Heart right ventricle (tissue), 16 donors: ENCODE measurements at regions of chr3 and their contacts with region 1.

Region 1: GRCh38 chr3:128170805-128171516 is 17.7 kb downstream of the EEFSEC start:
- DNase-seq: peak; percentile 23 to 70
- ATAC-seq: peak in 7 of 8 donors; percentile 66 to 76 (median 72)
- H3K4me3 ChIP-seq: no peak overlapping the region
- H3K27ac ChIP-seq: no peak overlapping the region
- H3K4me1 ChIP-seq: peaks cover 11 to 80% (median 54%) of the 10 kb centered on the region in 9 donors
- H3K27me3 ChIP-seq: no peaks in the 10 kb centered on the region
- CTCF ChIP-seq: peak; percentile 30 to 87 (median 71)

Region 2: GRCh38 chr3:128217702-128218547 is 47.0 kb after region 1 on chr3:
- intact Hi-C with region 1: no loop called
- DNase-seq: no peak
- ATAC-seq: peak in 2 of 8 donors; percentile 7 to 31
- H3K4me3 ChIP-seq: no peak overlapping the region
- H3K27ac ChIP-seq: peak overlapping the region in 1 of 10 donors; percentile 17
- H3K4me1 ChIP-seq: peaks cover 0 to 29% (median 0%) of the 10 kb centered on the region in 9 donors
- H3K27me3 ChIP-seq: no peaks in the 10 kb centered on the region
- CTCF ChIP-seq: no peak

Region 3: GRCh38 chr3:128316481-128316891 is 145.5 kb after region 1 on chr3:
- intact Hi-C with region 1: loop called in 6 of 10 experiments (anchors 5 to 10 kb)
- DNase-seq: no peak
- ATAC-seq: peak in 2 of 8 donors; percentile 3 to 33
- H3K4me3 ChIP-seq: no peak overlapping the region
- H3K27ac ChIP-seq: no peak overlapping the region
- H3K4me1 ChIP-seq: peaks cover 0 to 27% (median 5%) of the 10 kb centered on the region in 9 donors
- H3K27me3 ChIP-seq: no peaks in the 10 kb centered on the region
- CTCF ChIP-seq: no peak